ENCODE measurements at regions of chr5 and their contacts with region 1.

Region 1: DNA sequence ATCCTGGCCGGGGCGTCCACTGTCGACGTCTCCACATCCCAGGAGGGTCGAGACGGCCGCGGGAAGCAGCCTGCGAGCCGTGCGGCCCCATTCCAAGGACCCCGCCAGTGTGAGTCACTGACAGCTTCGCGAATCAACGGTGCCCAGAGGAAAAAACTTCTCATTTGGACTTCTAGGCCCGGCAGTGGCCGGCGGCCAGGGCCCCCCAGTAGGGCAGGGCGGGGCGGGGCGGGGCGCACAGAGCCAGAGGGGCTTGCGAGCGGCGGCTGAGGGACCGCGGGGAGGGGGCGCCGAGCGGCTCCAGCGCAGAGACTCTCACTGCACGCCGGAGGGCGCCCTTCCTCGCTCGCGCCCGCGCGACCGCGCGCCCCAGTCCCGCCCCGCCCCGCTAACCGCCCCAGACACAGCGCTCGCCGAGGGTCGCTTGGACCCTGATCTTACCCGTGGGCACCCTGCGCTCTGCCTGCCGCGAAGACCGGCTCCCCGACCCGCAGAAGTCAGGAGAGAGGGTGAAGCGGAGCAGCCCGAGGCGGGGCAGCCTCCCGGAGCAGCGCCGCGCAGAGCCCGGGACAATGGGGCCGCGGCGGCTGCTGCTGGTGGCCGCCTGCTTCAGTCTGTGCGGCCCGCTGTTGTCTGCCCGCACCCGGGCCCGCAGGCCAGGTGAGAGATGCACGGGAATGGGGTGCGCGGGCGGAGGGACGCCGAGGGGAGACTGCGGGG is at the start of gene F2R:
- DNase-seq: peak; percentile 37
- H3K4me3 Mint-ChIP-seq: peak within 1 kb of the TSS; percentile 82
- H3K27ac Mint-ChIP-seq: peak within 1 kb of the TSS; percentile 22
- H3K4me1 Mint-ChIP-seq: peaks cover 36% of the 10 kb centered on the region
- H3K27me3 Mint-ChIP-seq: peaks cover 25% of the 10 kb centered on the region
- total RNA-seq, gene F2R: 2.8 and 3.3 TPM in 2 replicates

Region 2: DNA sequence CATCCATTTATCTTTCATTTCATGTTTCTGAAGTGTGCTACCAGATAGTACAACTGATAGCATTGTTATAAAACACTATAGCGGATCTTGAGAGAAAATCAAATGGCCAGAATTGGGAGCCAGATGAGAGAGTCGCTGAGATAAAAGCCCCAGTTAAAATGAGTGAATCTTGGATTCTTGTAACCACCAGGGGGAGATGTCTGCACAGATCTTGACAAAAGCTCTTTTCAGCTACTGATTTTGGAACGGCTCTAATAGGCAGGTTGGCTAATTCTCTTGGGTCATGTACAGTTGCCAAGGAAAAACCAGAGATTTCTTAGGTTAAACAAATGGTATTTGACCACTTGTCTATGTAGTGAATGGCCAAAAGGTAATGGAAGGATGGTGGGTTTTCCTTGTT is 114.4 kb before region 1 on chr5:
- intact Hi-C with region 1: loop called (anchors 5 kb)
- DNase-seq: no peak
- H3K4me3 Mint-ChIP-seq: no peak overlapping the region
- H3K27ac Mint-ChIP-seq: no peak overlapping the region
- H3K4me1 Mint-ChIP-seq: peaks cover 12% of the 10 kb centered on the region
- H3K27me3 Mint-ChIP-seq: no peaks in the 10 kb centered on the region

Region 3: DNA sequence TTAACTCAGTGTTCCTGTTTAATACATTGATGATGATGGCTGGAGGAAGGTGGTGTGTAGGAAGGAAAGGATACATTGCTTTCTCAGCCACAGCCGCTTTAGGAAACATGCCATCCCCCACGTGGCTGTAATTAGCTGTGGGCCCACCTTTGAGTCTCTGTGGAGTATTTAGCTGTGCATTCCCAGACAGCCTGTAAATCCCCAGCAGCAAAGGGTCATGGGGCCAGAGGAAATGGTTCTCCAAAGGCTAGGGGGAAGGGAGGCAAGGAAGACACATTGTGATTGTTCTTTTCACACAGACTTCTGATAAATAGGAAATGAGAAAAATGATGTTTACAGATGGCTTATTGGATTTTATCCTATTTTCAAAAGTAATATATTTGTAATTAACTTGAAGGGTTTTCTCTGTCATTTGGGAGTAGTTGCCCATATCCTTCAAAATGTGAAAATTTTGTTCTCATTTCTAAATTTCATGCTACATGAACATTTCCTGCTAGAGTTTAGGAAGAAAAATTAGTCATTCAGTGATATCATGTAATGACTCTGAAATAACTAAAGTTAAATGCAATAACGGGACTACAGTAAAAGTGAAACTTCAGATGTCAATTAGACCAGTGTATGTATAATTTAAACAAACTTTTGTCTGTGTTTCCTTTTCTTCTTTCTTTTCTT is 24.3 kb before region 1 on chr5:
- intact Hi-C with region 1: loop called (anchors 2 kb)
- DNase-seq: no peak
- H3K4me3 Mint-ChIP-seq: no peak overlapping the region
- H3K27ac Mint-ChIP-seq: peak overlapping the region; percentile 7
- H3K4me1 Mint-ChIP-seq: peaks cover 19% of the 10 kb centered on the region
- H3K27me3 Mint-ChIP-seq: no peaks in the 10 kb centered on the region

Region 4: DNA sequence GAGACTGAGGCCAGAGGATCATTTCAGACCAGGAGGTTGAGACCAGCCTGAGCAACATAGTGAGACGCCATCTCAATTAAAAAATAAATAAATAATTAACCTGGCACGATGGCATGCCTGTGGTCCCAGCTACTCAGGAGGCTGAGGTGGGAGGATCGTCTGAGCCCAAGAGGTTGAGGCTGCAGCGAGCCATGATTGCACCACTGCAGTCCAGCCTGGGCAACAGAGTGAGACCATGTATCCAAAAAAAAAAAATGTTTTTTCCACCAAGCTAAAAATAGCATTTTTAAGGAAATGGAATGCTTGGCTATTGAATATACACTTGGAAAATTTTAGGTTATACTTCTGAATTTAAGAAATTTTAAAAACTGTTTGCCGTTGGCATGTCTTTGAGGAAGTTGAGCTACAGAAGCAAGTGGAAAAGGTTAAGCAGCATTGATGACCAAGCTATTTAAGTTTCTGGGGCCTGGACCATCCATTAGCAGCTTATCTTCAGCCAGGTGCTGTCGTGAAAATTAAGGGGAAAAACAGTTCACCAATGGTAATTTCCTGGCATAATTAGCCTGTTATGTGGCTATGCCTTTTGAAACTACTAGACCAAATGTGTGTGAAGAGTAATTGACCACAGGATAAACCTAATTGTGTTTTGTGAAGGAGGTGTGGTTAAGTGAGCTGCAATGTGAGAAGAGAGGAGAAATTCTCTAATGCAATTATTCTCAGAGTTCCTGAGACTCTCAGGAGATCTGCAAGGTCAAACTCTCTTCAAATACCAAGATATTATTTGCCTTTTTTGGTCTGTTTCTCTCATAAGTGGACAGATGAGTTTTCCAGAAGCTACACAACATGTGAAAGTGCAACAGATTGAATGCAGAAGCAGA is 21.0 kb after region 1 on chr5:
- intact Hi-C with region 1: loop called (anchors 1 kb)
- DNase-seq: no peak
- H3K4me3 Mint-ChIP-seq: no peak overlapping the region
- H3K27ac Mint-ChIP-seq: peak overlapping the region; percentile 67
- H3K4me1 Mint-ChIP-seq: peaks cover 37% of the 10 kb centered on the region
- H3K27me3 Mint-ChIP-seq: no peaks in the 10 kb centered on the region

Region 5: GRCh38 chr5:76771705-76772405 is 56.0 kb after region 1 on chr5:
- intact Hi-C with region 1: loop called (anchors 1 kb)
- DNase-seq: no peak
- H3K4me3 Mint-ChIP-seq: no peak overlapping the region
- H3K27ac Mint-ChIP-seq: no peak overlapping the region
- H3K4me1 Mint-ChIP-seq: peaks cover 5% of the 10 kb centered on the region
- H3K27me3 Mint-ChIP-seq: no peaks in the 10 kb centered on the region

Measured in activated T-helper 2 cell treated with anti-CD3 and anti-CD28 coated beads, Interferon-gamma antibody, Interleukin-2, Interleukin-4, amounts not matched to agents 10 μg/mL and 5 μg/mL and 100 μg/mL, durations not matched to agents 14 hours and 24 hours and 36 hours (primary cell).